ENCODE measurements at regions of chr2 and their contacts with region 1.

Region 1: GRCh38 chr2:197255543-197255942 is 55.0 kb downstream of the ANKRD44 start:
- DNase-seq: peak; percentile 78
- H3K4me3 Mint-ChIP-seq: peak overlapping the region; percentile 83
- H3K27ac Mint-ChIP-seq: peak overlapping the region; percentile 97
- H3K4me1 Mint-ChIP-seq: peaks cover 80% of the 10 kb centered on the region
- H3K27me3 Mint-ChIP-seq: no peaks in the 10 kb centered on the region

Region 2: GRCh38 chr2:197191177-197191939 is 64.2 kb before region 1 on chr2:
- intact Hi-C with region 1: loop called (anchors 1 kb)
- DNase-seq: no peak
- H3K4me3 Mint-ChIP-seq: peak overlapping the region; percentile 0
- H3K27ac Mint-ChIP-seq: peak overlapping the region; percentile 47
- H3K4me1 Mint-ChIP-seq: peaks cover 83% of the 10 kb centered on the region
- H3K27me3 Mint-ChIP-seq: no peaks in the 10 kb centered on the region

Region 3: GRCh38 chr2:197216361-197216979 is 39.1 kb before region 1 on chr2:
- intact Hi-C with region 1: loop called (anchors 1 kb)
- DNase-seq: no peak
- H3K4me3 Mint-ChIP-seq: peak overlapping the region; percentile 80
- H3K27ac Mint-ChIP-seq: peak overlapping the region; percentile 94
- H3K4me1 Mint-ChIP-seq: peaks cover 83% of the 10 kb centered on the region
- H3K27me3 Mint-ChIP-seq: no peaks in the 10 kb centered on the region

Region 4: DNA sequence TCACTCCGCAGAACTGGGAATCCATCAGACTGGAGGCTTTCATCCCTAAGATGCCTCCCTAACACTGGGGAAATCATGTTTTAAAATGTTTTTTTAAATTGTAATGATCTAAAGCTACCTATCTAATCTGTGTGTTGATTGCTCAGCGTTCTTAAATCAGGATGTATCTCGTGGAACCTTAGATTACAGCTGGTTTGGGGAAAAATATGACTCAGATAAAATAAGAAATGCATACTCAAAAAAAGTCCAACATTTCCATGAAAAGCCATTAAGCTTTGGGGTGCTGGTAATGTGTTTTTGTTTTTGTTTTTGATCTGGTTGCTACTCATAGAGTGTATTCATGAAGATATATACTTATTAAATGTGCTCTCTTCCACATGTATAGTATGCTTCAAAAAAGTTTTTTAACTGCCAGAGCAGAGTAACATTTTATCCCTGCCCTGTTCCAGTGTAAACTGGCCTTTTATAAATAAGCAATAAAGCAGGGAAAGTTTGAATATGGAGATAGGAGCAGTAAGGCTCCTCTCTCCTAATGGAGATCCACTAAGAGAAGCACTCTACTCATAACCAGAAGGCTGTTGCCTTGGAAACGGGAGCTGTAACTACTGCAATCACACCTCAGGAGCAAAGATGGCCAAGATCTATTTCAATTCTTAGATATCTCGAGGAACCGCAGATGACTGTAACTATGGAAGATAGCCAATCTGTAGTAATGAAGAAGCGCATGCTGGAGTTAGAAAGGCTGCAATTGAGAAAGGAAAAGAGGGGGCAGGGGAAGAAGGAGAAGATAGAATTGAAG is 13.4 kb after region 1 on chr2:
- intact Hi-C with region 1: loop called (anchors 1 kb)
- DNase-seq: no peak
- H3K4me3 Mint-ChIP-seq: peak overlapping the region; percentile 6
- H3K27ac Mint-ChIP-seq: peak overlapping the region; percentile 90
- H3K4me1 Mint-ChIP-seq: peaks cover 90% of the 10 kb centered on the region
- H3K27me3 Mint-ChIP-seq: no peaks in the 10 kb centered on the region

Region 5: DNA sequence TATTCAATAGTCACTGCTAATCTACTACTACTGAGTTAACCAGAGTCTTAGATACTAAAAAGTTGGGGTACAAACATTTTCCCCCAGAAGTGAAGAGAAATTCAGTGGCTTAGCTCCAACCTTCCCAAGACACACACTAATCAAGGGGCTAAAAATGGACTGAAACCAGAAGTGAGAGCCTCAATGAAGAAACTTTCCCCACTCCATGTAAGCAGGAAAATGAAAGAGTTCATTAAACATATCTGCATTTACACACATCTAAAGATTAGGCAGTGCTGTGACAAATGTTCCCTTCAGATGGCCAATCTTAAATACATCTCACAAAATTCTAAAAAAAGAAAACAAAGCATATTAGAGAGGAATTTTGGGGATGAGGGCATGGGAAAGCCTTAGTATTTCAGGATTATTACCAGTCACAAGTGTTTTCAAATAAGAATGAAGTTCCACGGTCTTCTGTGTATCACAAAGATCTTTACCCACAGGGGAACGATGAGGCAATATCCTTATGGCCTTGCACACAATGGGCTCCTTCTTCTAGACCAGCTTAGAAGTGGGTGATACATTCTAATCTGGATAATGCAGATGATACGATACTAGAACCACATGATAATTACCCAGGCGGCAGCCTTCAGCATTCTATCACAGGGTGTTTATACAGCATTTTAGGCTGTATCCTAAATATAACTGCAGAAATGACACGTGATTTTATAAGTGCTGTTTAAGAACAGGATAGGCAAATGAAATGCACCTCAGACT is 37.9 kb after region 1 on chr2:
- intact Hi-C with region 1: loop called (anchors 1 kb)
- DNase-seq: no peak
- H3K4me3 Mint-ChIP-seq: peak overlapping the region; percentile 68
- H3K27ac Mint-ChIP-seq: peak overlapping the region; percentile 89
- H3K4me1 Mint-ChIP-seq: peaks cover 88% of the 10 kb centered on the region
- H3K27me3 Mint-ChIP-seq: no peaks in the 10 kb centered on the region

Measured in activated T-helper 1 cell treated with anti-CD3 and anti-CD28 coated beads, Interleukin-12 subunit alpha, Interleukin-12 subunit beta, Interleukin-2, Interleukin-4 antibody, amounts not matched to agents 30 ng/mL and 10 ng/mL and 1 ng/mL, durations not matched to agents 14 hours and 24 hours and 36 hours (primary cell).